Activated CD4-positive, alpha-beta memory T cell treated with anti-CD3 and anti-CD28 coated beads, Interleukin-2, amount 10 ng/mL, durations not matched to agents 7 days and 5 days (primary cell): ENCODE measurements at regions of chr12 and their contacts with region 1.

Region 1: GRCh38 chr12:12562585-12563261 is at the start of gene DUSP16:
- DNase-seq: peak; percentile 86
- H3K4me3 Mint-ChIP-seq: peak within 1 kb of the TSS; percentile 83
- H3K27ac Mint-ChIP-seq: peak within 1 kb of the TSS; percentile 94
- H3K4me1 Mint-ChIP-seq: peaks cover 42% of the 10 kb centered on the region
- H3K27me3 Mint-ChIP-seq: no peaks in the 10 kb centered on the region
- total RNA-seq, gene DUSP16: 77.3 to 85.2 TPM

Region 2: GRCh38 chr12:12214635-12215131 is 348.0 kb before region 1 on chr12:
- CTCF ChIA-PET with region 1: no interaction called
- POLR2A ChIA-PET with region 1: no interaction called
- DNase-seq: no peak
- H3K4me3 Mint-ChIP-seq: no peak overlapping the region
- H3K27ac Mint-ChIP-seq: no peak overlapping the region
- H3K4me1 Mint-ChIP-seq: peaks cover 11% of the 10 kb centered on the region
- H3K27me3 Mint-ChIP-seq: peaks cover 50% of the 10 kb centered on the region

Region 3: GRCh38 chr12:12376646-12377448 is 185.9 kb before region 1 on chr12:
- CTCF ChIA-PET with region 1: interaction called, 20 read pairs
- POLR2A ChIA-PET with region 1: interaction called, 18 read pairs
- DNase-seq: no peak
- H3K4me3 Mint-ChIP-seq: no peak overlapping the region
- H3K27ac Mint-ChIP-seq: peak overlapping the region; percentile 65
- H3K4me1 Mint-ChIP-seq: peaks cover 60% of the 10 kb centered on the region
- H3K27me3 Mint-ChIP-seq: no peaks in the 10 kb centered on the region

Region 4: DNA sequence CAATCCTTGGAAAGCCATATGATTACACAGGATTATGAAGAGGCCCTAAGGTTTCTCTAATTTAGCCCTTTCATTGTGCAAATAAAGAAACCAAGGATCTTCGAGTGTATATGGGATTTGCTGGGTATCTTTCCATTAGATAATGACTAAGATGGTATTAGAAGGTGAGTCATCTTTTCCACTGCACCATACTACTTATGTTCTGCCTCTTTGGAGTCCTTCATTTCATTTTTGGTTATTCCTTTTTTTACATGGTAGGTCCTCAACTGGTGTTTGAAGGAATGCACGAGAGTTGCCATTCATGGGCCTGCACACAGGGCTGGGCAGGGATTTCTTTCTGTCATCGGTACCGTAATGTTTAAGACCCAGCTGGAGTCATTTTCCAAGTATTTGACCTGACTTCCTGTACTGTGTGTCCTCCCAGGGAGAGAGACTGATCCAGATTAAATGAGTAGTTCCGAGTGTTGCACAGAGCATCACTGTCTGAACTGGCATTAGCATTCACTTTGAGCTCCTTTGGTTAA is 120.1 kb before region 1 on chr12:
- CTCF ChIA-PET with region 1: interaction called, 4 read pairs
- POLR2A ChIA-PET with region 1: interaction called, 11 read pairs
- DNase-seq: no peak
- H3K4me3 Mint-ChIP-seq: peak overlapping the region; percentile 39
- H3K27ac Mint-ChIP-seq: peak overlapping the region; percentile 98
- H3K4me1 Mint-ChIP-seq: peaks cover 91% of the 10 kb centered on the region
- H3K27me3 Mint-ChIP-seq: no peaks in the 10 kb centered on the region

Region 5: DNA sequence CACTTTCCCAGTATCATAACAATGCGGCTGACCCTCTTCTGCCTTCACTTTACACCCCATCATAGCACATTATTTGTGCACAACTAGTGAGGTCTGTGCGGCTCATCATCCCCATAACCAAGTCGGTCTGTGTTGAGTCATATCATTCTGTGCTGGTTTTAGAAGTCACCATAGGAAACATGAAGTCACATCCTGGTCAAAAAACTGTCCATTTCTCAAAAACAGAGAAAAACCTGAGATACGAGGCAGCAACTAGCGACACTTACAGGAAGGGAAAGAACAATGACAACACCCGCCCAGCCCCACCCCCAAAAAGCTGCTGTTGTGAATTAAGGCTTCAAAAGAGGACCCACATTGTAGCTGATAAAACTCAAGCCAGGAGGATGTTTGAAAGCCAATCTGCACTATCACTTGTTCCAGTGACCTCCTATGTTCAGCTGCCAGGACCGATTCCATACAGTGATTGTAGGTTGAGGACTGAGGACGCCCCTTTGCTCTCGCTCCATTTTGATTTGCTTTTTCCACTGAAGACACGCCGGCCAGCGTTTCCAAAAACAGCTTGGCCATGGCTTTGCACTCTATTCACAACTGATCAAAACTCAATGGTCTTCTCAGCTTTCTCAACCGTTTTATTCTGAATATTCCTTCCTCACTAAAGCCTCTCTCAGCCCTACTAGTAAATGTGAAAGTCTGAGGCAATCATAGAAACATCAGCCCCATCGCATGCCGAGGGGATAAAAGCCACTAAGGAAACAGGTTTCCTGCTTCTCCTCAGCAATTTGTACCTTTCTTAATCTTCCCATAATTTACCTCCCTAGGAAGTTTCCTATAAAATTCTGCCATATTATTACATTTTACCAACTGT is 87.6 kb before region 1 on chr12:
- CTCF ChIA-PET with region 1: interaction called, 26 read pairs
- POLR2A ChIA-PET with region 1: interaction called, 52 read pairs
- DNase-seq: peak; percentile 74
- H3K4me3 Mint-ChIP-seq: peak overlapping the region; percentile 67
- H3K27ac Mint-ChIP-seq: peak overlapping the region; percentile 100
- H3K4me1 Mint-ChIP-seq: peaks cover 86% of the 10 kb centered on the region
- H3K27me3 Mint-ChIP-seq: no peaks in the 10 kb centered on the region

Region 6: GRCh38 chr12:12505544-12506495 is 56.9 kb before region 1 on chr12:
- CTCF ChIA-PET with region 1: interaction called, 7 read pairs
- POLR2A ChIA-PET with region 1: interaction called, 13 read pairs
- DNase-seq: no peak
- H3K4me3 Mint-ChIP-seq: peak overlapping the region; percentile 65
- H3K27ac Mint-ChIP-seq: peak overlapping the region; percentile 81
- H3K4me1 Mint-ChIP-seq: peaks cover 76% of the 10 kb centered on the region
- H3K27me3 Mint-ChIP-seq: no peaks in the 10 kb centered on the region

Region 7: DNA sequence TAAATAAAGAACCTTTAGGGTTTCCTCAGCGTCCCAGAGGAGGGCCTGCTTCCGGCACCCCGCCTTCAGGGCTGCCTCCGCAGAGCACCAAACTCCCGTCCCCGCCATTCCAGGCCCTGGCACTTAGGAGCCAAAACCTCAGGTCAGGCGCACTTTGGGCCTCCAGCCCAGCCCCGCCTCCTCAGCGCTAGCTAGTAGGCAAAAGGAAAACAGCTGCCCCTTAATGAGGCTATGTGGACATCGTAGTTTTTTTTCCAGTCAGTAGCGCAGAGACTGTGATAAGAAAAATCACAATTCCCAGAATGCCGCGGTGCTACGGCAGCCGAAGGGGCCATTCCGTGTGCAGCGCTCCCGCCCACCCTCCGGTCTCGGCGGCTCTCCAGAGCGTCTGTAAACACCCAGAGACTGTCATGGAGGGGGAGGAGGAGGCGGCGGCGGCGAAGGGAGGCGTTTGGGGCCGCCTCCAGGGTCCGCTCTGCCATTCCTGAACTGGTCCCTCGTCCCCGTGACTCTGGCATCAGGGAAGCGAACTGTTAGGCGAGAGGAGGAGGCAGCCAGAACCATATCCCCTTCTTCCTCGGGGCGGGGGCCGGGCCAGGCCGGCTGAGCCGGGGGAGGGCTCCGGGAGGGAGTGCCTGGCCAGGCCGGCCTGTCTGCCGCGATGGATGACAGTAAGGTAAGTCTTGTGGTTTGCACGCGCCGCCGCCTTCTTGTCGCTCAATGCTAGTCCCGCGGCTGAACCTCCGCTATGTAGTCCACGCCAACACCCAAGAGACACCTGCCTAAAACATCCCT is 49.0 kb after region 1 on chr12 and contains the start of gene CREBL2:
- CTCF ChIA-PET with region 1: interaction called, 11 read pairs
- POLR2A ChIA-PET with region 1: interaction called, 7 read pairs
- DNase-seq: peak; percentile 86
- H3K4me3 Mint-ChIP-seq: peak within 1 kb of the TSS; percentile 89
- H3K27ac Mint-ChIP-seq: peak within 1 kb of the TSS; percentile 95
- H3K4me1 Mint-ChIP-seq: peaks cover 64% of the 10 kb centered on the region
- H3K27me3 Mint-ChIP-seq: no peaks in the 10 kb centered on the region
- total RNA-seq, gene CREBL2: 24.2 to 26.1 TPM

Region 8: GRCh38 chr12:12673296-12673695 is 110.6 kb after region 1 on chr12:
- CTCF ChIA-PET with region 1: no interaction called
- POLR2A ChIA-PET with region 1: no interaction called
- DNase-seq: peak; percentile 27
- H3K4me3 Mint-ChIP-seq: no peak overlapping the region
- H3K27ac Mint-ChIP-seq: peak overlapping the region; percentile 69
- H3K4me1 Mint-ChIP-seq: peaks cover 31% of the 10 kb centered on the region
- H3K27me3 Mint-ChIP-seq: no peaks in the 10 kb centered on the region

Region 9: DNA sequence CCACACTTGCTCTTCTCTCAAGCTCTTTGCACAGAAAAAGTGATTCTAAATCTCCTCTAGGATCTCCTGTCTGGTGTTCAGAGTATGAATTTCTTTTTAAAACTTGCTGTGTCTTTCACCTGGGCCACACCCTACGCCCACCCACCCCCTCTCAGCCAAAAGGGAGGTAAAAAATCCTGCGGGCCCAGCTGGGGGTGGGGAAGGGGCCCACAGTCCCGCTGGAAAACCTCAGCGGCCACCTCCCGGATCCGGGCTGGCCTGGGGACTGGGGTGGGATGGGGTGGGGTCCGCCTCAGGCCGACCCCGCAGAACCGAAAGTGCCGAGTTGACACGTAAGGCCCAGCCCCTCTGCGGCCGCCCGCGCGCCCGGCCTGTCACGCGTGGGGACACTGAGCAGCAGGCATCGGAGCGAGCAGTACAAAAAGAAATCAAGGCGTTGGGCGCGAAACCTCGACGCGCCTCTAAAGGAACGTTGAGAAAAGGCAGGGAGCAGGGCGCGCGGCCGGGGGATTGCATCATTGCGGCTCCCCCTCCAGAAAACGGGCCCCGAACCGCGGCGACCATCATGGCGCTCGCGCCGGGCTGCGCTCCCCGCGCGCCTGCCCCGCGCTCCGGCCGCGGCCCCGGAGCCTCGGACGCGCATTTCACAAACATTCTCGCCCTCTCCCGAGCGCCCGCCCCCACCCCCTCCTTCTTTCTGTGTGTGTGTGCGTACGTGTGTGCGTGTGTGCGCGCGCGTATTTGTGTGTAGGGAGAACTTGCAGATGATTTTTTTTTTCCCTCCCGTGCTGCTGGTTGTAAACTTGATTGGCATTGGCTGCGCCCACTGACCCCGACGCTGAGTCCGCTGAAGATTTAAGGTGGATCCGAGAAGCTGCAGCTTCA is 162.2 kb after region 1 on chr12:
- CTCF ChIA-PET with region 1: interaction called, 3 read pairs
- POLR2A ChIA-PET with region 1: interaction called, 257 read pairs
- DNase-seq: peak; percentile 92
- H3K4me3 Mint-ChIP-seq: peak overlapping the region; percentile 94
- H3K27ac Mint-ChIP-seq: peak overlapping the region; percentile 96
- H3K4me1 Mint-ChIP-seq: peaks cover 33% of the 10 kb centered on the region
- H3K27me3 Mint-ChIP-seq: no peaks in the 10 kb centered on the region